CD4-positive, alpha-beta memory T cell (primary cell): ENCODE measurements at regions of chr11 and their contacts with region 1.

Region 1: DNA sequence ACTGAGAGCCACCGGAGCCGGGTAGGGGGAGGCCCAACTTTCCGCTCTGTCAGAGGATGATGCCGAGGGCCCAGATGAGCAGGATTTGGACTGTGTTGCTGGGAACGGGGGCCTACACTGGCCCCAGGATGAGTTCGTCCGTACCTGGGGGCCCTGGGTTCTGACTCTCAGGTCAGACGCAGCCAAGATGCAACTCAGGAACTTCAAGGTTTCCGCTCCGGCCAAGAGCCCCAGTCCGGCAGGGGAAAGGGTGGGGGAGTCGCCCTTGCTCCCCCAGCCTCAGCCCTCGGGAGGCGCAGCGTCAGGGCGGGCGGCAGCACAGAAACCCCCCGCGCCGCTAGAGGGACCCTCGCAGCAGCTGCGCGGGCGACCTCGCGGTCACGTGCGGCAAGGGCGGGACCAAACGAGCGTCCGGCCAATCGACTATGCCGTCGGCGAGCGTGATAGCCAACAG is 241 bp upstream of the ARL2 start:
- DNase-seq: peak; percentile 89 to 94 (median 90)
- H3K4me3 ChIP-seq: peak overlapping the region; percentile 90 to 97
- H3K4me3 Mint-ChIP-seq: peak overlapping the region; percentile 89 to 97 (median 92)
- H3K27ac ChIP-seq: peak overlapping the region; percentile 98
- H3K27ac Mint-ChIP-seq: peak overlapping the region; percentile 95 to 98 (median 97)
- H3K4me1 ChIP-seq: peaks cover 23% of the 10 kb centered on the region
- H3K4me1 Mint-ChIP-seq: peaks cover 13 to 28% (median 23%) of the 10 kb centered on the region in 4 donors
- H3K27me3 ChIP-seq: no peaks in the 10 kb centered on the region
- H3K27me3 Mint-ChIP-seq: no peaks in the 10 kb centered on the region

Region 2: GRCh38 chr11:64846998-64847666 is 166.6 kb before region 1 on chr11:
- CTCF ChIA-PET with region 1: interaction called, 39 read pairs
- POLR2A ChIA-PET with region 1: interaction called, 6 read pairs
- intact Hi-C with region 1: loop called (anchors 1 kb)
- DNase-seq: peak; percentile 84 to 90 (median 88)
- H3K4me3 ChIP-seq: no peak overlapping the region
- H3K4me3 Mint-ChIP-seq: peak overlapping the region in 4 of 8 donors; percentile 20 to 62 (median 34)
- H3K27ac ChIP-seq: peak overlapping the region; percentile 23
- H3K27ac Mint-ChIP-seq: peak overlapping the region; percentile 11 to 89 (median 82)
- H3K4me1 ChIP-seq: peaks cover 65% of the 10 kb centered on the region
- H3K4me1 Mint-ChIP-seq: peaks cover 35 to 64% (median 49%) of the 10 kb centered on the region in 4 donors
- H3K27me3 ChIP-seq: no peaks in the 10 kb centered on the region
- H3K27me3 Mint-ChIP-seq: no peaks in the 10 kb centered on the region

Region 3: GRCh38 chr11:64924102-64924851 is 89.4 kb before region 1 on chr11 and contains the start of gene PPP2R5B:
- CTCF ChIA-PET with region 1: no interaction called
- POLR2A ChIA-PET with region 1: interaction called, 10 read pairs
- intact Hi-C with region 1: no loop called
- DNase-seq: peak; percentile 87 to 95 (median 90)
- H3K4me3 ChIP-seq: peak within 1 kb of the TSS; percentile 61 to 85
- H3K4me3 Mint-ChIP-seq: peak within 1 kb of the TSS; percentile 93 to 99 (median 96)
- H3K27ac ChIP-seq: peak within 1 kb of the TSS; percentile 78
- H3K27ac Mint-ChIP-seq: peak within 1 kb of the TSS; percentile 98 to 100 (median 99)
- H3K4me1 ChIP-seq: peaks cover 20% of the 10 kb centered on the region
- H3K4me1 Mint-ChIP-seq: peaks cover 9 to 15% (median 11%) of the 10 kb centered on the region in 4 donors
- H3K27me3 ChIP-seq: no peaks in the 10 kb centered on the region
- H3K27me3 Mint-ChIP-seq: no peaks in the 10 kb centered on the region
- total RNA-seq, gene PPP2R5B: 14.0 to 15.8 TPM

Region 4: GRCh38 chr11:65040847-65041621 is 27.3 kb after region 1 on chr11 and contains the start of gene SAC3D1:
- CTCF ChIA-PET with region 1: interaction called, 3 read pairs
- POLR2A ChIA-PET with region 1: interaction called, 15 read pairs
- intact Hi-C with region 1: loop called (anchors 1 kb)
- DNase-seq: peak; percentile 87 to 91 (median 90)
- H3K4me3 ChIP-seq: peak within 1 kb of the TSS; percentile 61 to 64
- H3K4me3 Mint-ChIP-seq: peak within 1 kb of the TSS; percentile 92 to 97 (median 94)
- H3K27ac ChIP-seq: peak within 1 kb of the TSS; percentile 61
- H3K27ac Mint-ChIP-seq: peak within 1 kb of the TSS; percentile 87 to 97 (median 95)
- H3K4me1 ChIP-seq: peaks cover 25% of the 10 kb centered on the region
- H3K4me1 Mint-ChIP-seq: peaks cover 5 to 24% (median 15%) of the 10 kb centered on the region in 4 donors
- H3K27me3 ChIP-seq: no peaks in the 10 kb centered on the region
- H3K27me3 Mint-ChIP-seq: no peaks in the 10 kb centered on the region
- total RNA-seq, gene SAC3D1: 9.4 to 10.5 TPM

Region 5: DNA sequence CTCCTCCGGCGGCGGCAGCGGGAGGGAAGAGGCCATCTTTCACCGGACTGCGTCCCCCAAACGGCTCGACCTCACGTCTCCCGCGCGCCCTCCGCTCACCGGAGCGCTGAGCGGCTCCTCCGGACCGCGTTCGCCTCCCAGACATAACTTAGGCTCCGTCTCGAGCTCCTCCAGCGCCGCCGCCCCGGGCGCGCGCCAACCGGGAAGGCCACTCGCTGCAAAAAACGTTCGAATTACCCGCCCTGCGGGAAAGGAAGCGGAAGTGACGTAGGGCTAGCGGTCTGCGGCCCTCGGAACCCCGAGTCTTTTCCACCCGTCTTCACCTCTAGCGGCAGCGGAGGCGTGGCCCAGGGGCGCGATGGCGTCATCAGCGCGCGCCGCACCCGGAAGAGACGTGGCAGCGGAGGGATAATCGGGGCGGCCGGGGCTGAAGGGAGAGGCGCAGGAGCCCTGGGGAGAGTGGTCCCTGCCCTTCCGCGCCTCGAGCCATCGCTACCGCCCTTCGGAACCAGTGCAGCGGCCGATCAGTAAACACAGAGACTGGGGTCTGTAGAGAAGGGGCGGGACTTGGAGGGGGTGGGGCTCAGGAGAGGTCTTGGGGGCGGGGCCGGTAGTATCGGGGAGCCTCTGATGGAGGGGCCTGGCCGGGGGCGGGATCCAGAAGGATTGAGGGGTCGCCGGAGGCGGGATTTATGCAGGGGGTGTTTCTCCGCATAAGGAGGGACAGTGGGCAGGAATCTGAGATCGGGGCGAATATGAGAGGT is 70.3 kb after region 1 on chr11 and contains the starts of genes CDCA5 and ZFPL1:
- CTCF ChIA-PET with region 1: interaction called, 57 read pairs
- POLR2A ChIA-PET with region 1: interaction called, 3 read pairs
- intact Hi-C with region 1: loop called (anchors 1 kb)
- DNase-seq: peak; percentile 94 to 98 (median 97)
- H3K4me3 ChIP-seq: peak within 1 kb of the TSS; percentile 74 to 75
- H3K4me3 Mint-ChIP-seq: peak within 1 kb of the TSS; percentile 92 to 96 (median 94)
- H3K27ac ChIP-seq: peak within 1 kb of the TSS; percentile 94
- H3K27ac Mint-ChIP-seq: peak within 1 kb of the TSS; percentile 97 to 99 (median 98)
- H3K4me1 ChIP-seq: peaks cover 25% of the 10 kb centered on the region
- H3K4me1 Mint-ChIP-seq: peaks cover 9 to 42% (median 26%) of the 10 kb centered on the region in 4 donors
- H3K27me3 ChIP-seq: no peaks in the 10 kb centered on the region
- H3K27me3 Mint-ChIP-seq: no peaks in the 10 kb centered on the region
- total RNA-seq, gene CDCA5: 0.41 to 0.64 TPM
- total RNA-seq, gene ZFPL1: 48.6 to 51.9 TPM

Region 6: GRCh38 chr11:65111744-65112414 is 98.2 kb after region 1 on chr11 and contains the start of gene TM7SF2:
- CTCF ChIA-PET with region 1: interaction called, 20 read pairs
- POLR2A ChIA-PET with region 1: interaction called, 10 read pairs
- intact Hi-C with region 1: loop called (anchors 1 kb)
- DNase-seq: peak; percentile 91 to 96 (median 93)
- H3K4me3 ChIP-seq: peak within 1 kb of the TSS; percentile 36 to 66
- H3K4me3 Mint-ChIP-seq: peak within 1 kb of the TSS; percentile 88 to 96 (median 88)
- H3K27ac ChIP-seq: peak within 1 kb of the TSS; percentile 59
- H3K27ac Mint-ChIP-seq: peak within 1 kb of the TSS; percentile 90 to 96 (median 91)
- H3K4me1 ChIP-seq: peaks cover 45% of the 10 kb centered on the region
- H3K4me1 Mint-ChIP-seq: peaks cover 14 to 52% (median 39%) of the 10 kb centered on the region in 4 donors
- H3K27me3 ChIP-seq: no peaks in the 10 kb centered on the region
- H3K27me3 Mint-ChIP-seq: no peaks in the 10 kb centered on the region
- total RNA-seq, gene TM7SF2: 22.4 to 27.2 TPM